Caco-2 (cell line): ENCODE measurements at regions of chr2 and their contacts with region 1.

Region 1: GRCh38 chr2:196453613-196454047 is 185.9 kb upstream of the CCDC150 start:
- DNase-seq: peak; percentile 42 to 57
- H3K4me3 ChIP-seq: no peak overlapping the region
- H3K4me3 Mint-ChIP-seq: no peak overlapping the region
- H3K27ac Mint-ChIP-seq: no peak overlapping the region
- H3K4me1 ChIP-seq: no peaks in the 10 kb centered on the region
- H3K4me1 Mint-ChIP-seq: no peaks in the 10 kb centered on the region
- H3K27me3 ChIP-seq: no peaks in the 10 kb centered on the region
- H3K27me3 Mint-ChIP-seq: peaks cover 2% of the 10 kb centered on the region
- CTCF ChIP-seq: peak; percentile 65 to 69

Region 2: GRCh38 chr2:196076778-196077568 is 376.7 kb before region 1 on chr2:
- CTCF ChIA-PET with region 1: interaction called, 11 read pairs
- POLR2A ChIA-PET with region 1: no interaction called
- intact Hi-C with region 1: loop called (anchors 1 kb)
- DNase-seq: no peak
- H3K4me3 ChIP-seq: no peak overlapping the region
- H3K4me3 Mint-ChIP-seq: no peak overlapping the region
- H3K27ac Mint-ChIP-seq: no peak overlapping the region
- H3K4me1 ChIP-seq: peaks cover 8% of the 10 kb centered on the region
- H3K4me1 Mint-ChIP-seq: peaks cover 7% of the 10 kb centered on the region
- H3K27me3 ChIP-seq: no peaks in the 10 kb centered on the region
- H3K27me3 Mint-ChIP-seq: no peaks in the 10 kb centered on the region
- CTCF ChIP-seq: no peak

Region 3: DNA sequence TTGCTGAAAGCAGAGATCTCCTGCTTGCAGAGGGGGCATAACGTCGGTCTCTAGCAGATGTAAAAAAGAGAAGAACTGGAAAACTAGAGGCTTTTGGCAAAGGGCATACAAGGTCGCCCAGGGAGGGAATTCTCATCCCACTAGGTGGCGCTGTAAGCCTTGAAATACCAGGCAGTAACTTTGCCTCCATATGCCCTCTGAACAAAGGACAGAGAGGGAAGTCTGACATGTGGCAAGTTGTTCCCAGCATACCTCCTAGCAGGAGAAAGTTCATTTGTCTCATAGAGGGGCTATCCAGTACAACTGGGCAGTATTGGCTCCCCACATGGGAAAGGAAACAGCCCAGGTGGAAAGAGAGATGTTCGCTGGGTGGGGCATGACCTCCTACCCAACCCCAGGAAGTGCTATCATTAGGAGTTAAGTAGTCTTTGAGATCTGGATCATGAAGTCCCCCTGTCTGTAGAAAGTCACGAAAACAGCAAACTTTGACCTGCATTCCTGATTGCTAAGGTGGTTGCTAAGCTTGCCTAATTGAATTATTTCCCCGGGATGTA is 322.2 kb before region 1 on chr2:
- CTCF ChIA-PET with region 1: no interaction called
- POLR2A ChIA-PET with region 1: no interaction called
- intact Hi-C with region 1: loop called (anchors 5 kb)
- DNase-seq: peak; percentile 58 to 72
- H3K4me3 ChIP-seq: no peak overlapping the region
- H3K4me3 Mint-ChIP-seq: no peak overlapping the region
- H3K27ac Mint-ChIP-seq: peak overlapping the region; percentile 66
- H3K4me1 ChIP-seq: no peaks in the 10 kb centered on the region
- H3K4me1 Mint-ChIP-seq: no peaks in the 10 kb centered on the region
- H3K27me3 ChIP-seq: no peaks in the 10 kb centered on the region
- H3K27me3 Mint-ChIP-seq: no peaks in the 10 kb centered on the region
- CTCF ChIP-seq: peak in 1 of 2 experiments; percentile 68

Region 4: DNA sequence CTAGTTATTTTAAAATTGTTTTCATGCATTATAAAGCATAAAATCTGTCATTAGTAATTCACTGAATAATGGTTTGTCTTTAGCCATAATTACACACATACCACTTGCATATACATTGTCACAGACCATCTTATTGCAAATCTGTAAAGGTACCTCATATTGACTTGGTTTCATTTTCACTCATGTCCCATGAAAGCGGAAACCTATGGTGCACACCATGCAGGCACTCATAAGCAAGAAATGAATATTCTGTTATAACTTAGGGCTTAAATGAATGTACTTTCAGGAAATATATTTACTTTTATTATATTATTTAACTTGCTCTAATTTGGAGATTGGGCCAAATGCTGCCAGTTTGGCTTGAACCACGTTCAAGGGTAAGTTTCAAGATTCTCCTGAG is 253.1 kb before region 1 on chr2:
- CTCF ChIA-PET with region 1: no interaction called
- POLR2A ChIA-PET with region 1: no interaction called
- intact Hi-C with region 1: no loop called
- DNase-seq: no peak
- H3K4me3 ChIP-seq: no peak overlapping the region
- H3K4me3 Mint-ChIP-seq: no peak overlapping the region
- H3K27ac Mint-ChIP-seq: no peak overlapping the region
- H3K4me1 ChIP-seq: no peaks in the 10 kb centered on the region
- H3K4me1 Mint-ChIP-seq: no peaks in the 10 kb centered on the region
- H3K27me3 ChIP-seq: no peaks in the 10 kb centered on the region
- H3K27me3 Mint-ChIP-seq: no peaks in the 10 kb centered on the region
- CTCF ChIP-seq: no peak

Region 5: DNA sequence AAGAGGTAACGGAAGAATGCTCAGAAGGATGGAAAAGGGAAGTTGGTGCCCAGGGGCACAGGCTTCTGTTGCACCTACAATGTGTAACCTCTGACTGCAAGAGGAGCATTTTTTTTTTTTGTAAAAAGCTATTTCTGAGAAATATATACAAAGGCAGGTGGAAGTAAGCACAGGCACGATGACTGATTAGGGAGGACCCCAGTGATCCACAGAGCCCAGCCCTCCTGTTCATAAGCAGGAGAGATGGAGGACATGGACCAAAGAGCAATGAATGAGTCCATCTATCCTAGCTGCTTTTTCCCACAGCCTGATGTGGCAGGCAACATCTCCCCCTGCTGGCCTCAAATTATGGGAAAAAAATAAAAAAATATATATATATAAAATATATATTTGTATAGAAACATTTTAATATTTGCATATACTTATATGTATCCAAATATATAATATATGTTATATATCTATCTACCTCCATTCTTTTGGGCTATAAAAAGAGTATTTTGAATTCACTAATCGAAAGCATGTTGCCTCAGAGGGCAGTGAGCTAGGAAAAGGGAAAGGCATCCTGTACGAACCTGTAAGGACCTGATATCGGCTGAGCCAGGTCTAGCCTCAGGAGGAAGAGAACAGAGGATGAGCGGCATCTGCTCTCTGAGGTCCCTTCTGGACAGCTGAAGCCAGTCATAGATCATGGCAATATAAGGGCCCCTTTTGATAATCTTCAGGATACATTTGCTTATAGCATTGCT is 116.2 kb before region 1 on chr2:
- CTCF ChIA-PET with region 1: interaction called, 6 read pairs
- POLR2A ChIA-PET with region 1: no interaction called
- intact Hi-C with region 1: loop called (anchors 2 kb)
- DNase-seq: peak in 1 of 2 experiments; percentile 34
- H3K4me3 ChIP-seq: no peak overlapping the region
- H3K4me3 Mint-ChIP-seq: no peak overlapping the region
- H3K27ac Mint-ChIP-seq: no peak overlapping the region
- H3K4me1 ChIP-seq: peaks cover 7% of the 10 kb centered on the region; the same call in 1 of the 2 replicates
- H3K4me1 Mint-ChIP-seq: peaks cover 7% of the 10 kb centered on the region
- H3K27me3 ChIP-seq: no peaks in the 10 kb centered on the region
- H3K27me3 Mint-ChIP-seq: no peaks in the 10 kb centered on the region
- CTCF ChIP-seq: peak; percentile 25 to 72

Region 6: DNA sequence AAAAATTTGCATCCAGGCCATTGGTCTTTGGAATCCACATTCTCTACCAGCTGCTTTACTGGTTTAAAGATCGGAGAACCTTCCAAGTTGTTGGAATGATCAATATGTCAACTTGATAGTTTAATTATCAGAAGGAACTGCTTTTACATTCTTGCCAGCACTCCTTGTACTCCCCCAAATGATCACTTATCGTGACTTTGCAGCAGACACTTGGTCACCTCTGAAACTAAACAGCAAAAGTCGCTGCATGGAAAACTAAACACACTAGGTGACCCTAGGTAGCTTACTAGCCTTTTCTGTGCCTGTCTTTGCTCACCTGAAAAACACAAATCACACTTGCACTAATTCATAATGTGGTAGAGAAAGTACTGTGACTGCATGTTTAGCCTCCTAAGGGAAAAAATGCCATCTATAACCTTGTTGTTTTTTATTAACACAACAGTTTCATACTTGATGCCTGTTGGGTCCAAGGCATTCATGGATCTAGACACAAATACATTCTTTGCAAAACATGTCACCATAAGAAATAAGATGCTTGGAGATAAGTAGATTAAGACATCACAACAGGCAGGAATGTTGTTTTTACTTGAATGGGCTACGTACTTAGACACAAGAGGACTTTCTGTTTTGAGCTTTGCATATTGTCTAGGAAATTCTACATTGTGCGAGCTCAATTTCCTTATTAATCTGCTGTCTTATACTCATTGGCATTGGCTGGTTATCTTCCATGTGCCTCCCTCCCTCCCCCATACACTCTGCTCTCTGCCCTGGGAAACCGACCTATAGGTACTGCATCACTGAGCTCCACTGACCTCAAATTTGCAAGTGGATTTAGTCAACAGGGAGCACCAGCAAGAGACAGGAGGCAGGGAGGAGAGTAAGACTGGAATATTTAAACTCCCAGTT is 63.1 kb before region 1 on chr2:
- CTCF ChIA-PET with region 1: no interaction called
- POLR2A ChIA-PET with region 1: no interaction called
- intact Hi-C with region 1: loop called (anchors 2 kb)
- DNase-seq: no peak
- H3K4me3 ChIP-seq: no peak overlapping the region
- H3K4me3 Mint-ChIP-seq: no peak overlapping the region
- H3K27ac Mint-ChIP-seq: no peak overlapping the region
- H3K4me1 ChIP-seq: no peaks in the 10 kb centered on the region
- H3K4me1 Mint-ChIP-seq: no peaks in the 10 kb centered on the region
- H3K27me3 ChIP-seq: no peaks in the 10 kb centered on the region
- H3K27me3 Mint-ChIP-seq: peaks cover 4% of the 10 kb centered on the region
- CTCF ChIP-seq: no peak

Region 7: DNA sequence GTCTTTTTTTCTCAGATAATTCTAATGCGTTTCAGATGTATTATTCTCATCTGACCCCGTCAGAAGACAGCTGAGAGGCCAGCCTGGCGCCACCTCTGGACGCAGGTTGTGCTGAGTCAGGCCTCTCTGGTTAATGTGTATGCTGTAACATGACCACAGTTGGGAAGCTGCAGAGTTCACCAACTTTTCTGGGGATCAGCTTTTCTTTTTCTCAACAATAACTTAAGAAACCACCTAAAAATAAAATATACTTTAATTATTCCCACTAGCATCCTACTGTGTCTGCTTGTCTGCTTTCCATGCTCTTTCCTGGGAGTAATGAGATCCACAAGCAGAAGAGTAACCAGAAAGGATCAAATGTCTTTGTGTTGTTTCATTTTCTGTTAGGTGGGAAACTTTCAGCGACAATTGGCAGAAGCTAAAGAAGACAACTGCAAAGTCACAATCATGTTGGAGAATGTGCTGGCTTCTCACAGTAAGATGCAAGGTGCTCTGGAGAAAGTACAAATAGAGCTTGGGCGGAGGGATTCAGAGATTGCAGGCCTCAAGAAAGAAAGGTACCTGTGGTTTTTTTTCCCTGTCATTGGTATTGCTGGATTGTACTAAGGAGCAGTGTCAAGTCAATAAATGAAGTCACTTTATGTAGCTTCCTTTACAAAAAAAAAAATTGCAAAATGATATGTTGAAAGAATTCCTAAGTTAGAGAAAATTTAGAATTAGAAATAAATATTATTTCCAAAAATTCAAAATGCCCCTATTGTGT is 265.7 kb after region 1 on chr2:
- CTCF ChIA-PET with region 1: no interaction called
- POLR2A ChIA-PET with region 1: no interaction called
- intact Hi-C with region 1: no loop called
- DNase-seq: peak in 1 of 2 experiments; percentile 36
- H3K4me3 ChIP-seq: no peak overlapping the region
- H3K4me3 Mint-ChIP-seq: no peak overlapping the region
- H3K27ac Mint-ChIP-seq: no peak overlapping the region
- H3K4me1 ChIP-seq: no peaks in the 10 kb centered on the region
- H3K4me1 Mint-ChIP-seq: peaks cover 6% of the 10 kb centered on the region
- H3K27me3 ChIP-seq: no peaks in the 10 kb centered on the region
- H3K27me3 Mint-ChIP-seq: no peaks in the 10 kb centered on the region
- CTCF ChIP-seq: peak in 1 of 2 experiments; percentile 48